ENCODE measurements at regions of chr17 and their contacts with region 1.

Region 1: DNA sequence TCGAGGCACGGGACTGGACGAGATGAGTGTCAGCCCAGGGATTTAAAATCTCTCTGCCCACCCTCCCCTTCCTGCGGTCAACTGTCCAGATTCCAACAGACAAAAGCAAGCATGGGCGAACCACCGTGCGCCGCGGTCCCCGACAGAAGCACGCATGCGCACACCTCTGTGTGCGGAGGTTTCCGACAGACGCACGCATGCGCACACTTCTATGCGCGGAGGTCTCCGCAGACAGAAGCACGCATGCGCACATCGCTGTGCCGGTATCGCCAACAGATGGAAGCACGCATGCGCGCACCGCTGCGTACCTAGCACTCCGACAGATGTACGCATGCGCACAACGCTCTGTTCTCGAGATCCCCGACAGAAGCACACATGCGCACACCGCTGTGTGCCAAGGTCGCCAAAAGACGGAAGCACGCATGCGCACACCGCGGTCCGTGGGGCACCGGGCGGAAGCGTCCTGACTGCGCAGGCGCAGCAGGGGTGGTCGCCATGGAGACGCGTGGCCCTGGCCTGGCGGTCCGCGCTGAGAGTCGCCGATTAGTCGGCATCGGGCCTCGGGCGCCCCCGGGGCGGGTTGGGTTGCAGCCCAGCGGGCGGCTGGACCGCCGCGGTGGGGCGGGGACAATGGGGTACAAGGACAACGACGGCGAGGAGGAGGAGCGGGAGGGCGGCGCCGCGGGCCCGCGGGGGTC is 57.4 kb upstream of the RPH3AL start:
- DNase-seq: peak; percentile 98 to 100 (median 99)
- H3K4me3 ChIP-seq: peak overlapping the region; percentile 72
- H3K4me3 Mint-ChIP-seq: peak overlapping the region; percentile 88 to 95 (median 90)
- H3K27ac ChIP-seq: peak overlapping the region; percentile 85
- H3K27ac Mint-ChIP-seq: peak overlapping the region; percentile 84 to 98 (median 96)
- H3K4me1 ChIP-seq: peaks cover 49% of the 10 kb centered on the region
- H3K4me1 Mint-ChIP-seq: peaks cover 49 to 61% (median 61%) of the 10 kb centered on the region in 3 donors
- H3K27me3 ChIP-seq: no peaks in the 10 kb centered on the region
- H3K27me3 Mint-ChIP-seq: peaks cover 0 to 8% of the 10 kb centered on the region in 2 donors

Region 2: DNA sequence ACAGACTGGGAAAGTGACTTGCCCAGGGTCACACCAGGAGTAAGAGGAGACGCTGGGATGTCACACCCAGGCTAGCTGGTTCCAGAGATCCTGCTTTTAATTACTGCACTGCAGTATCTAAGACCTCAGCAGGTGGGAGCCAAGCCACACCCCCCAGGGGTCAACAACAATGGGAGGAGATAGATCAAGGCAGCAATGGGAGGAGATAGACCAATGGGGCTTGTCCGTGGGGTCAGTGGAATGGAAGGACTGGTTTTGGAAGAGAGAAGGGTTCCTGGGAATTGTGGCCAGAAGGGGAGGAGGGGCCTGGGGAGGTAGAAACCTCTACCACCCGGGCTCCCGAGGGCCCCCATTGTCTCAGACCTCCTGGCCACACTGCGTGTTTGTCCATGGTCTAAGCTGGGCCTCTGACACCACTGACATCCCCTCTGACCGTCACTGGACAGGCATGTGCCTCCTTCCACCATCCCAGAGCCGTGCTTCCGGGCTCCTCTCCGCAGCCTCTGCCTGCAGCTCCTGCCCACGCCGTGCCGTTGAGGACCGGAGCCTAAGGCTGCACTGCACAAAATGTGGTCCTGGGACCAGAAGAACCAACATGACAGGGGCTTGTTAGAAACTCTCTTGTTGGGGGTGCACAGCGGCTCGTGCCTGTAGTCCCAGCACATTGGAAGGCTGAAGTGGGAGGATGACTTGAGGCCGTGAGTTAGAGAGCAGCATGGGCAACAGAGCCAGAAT is 12.4 kb after region 1 on chr17:
- CTCF ChIA-PET with region 1: interaction called, 22 read pairs
- POLR2A ChIA-PET with region 1: no interaction called
- DNase-seq: no peak
- H3K4me3 ChIP-seq: no peak overlapping the region
- H3K4me3 Mint-ChIP-seq: no peak overlapping the region
- H3K27ac ChIP-seq: no peak overlapping the region
- H3K27ac Mint-ChIP-seq: no peak overlapping the region
- H3K4me1 ChIP-seq: peaks cover 40% of the 10 kb centered on the region
- H3K4me1 Mint-ChIP-seq: peaks cover 30 to 36% (median 36%) of the 10 kb centered on the region in 3 donors
- H3K27me3 ChIP-seq: no peaks in the 10 kb centered on the region
- H3K27me3 Mint-ChIP-seq: peaks cover 0 to 1% of the 10 kb centered on the region in 2 donors

Region 3: GRCh38 chr17:489758-490329 is 79.8 kb after region 1 on chr17:
- CTCF ChIA-PET with region 1: interaction called, 9 read pairs
- POLR2A ChIA-PET with region 1: interaction called, 10 read pairs
- DNase-seq: peak; percentile 46 to 79 (median 66)
- H3K4me3 ChIP-seq: peak overlapping the region; percentile 76
- H3K4me3 Mint-ChIP-seq: peak overlapping the region; percentile 86 to 97 (median 91)
- H3K27ac ChIP-seq: peak overlapping the region; percentile 38
- H3K27ac Mint-ChIP-seq: peak overlapping the region in 7 of 8 donors; percentile 50 to 94 (median 82)
- H3K4me1 ChIP-seq: peaks cover 16% of the 10 kb centered on the region
- H3K4me1 Mint-ChIP-seq: peaks cover 6 to 15% (median 7%) of the 10 kb centered on the region in 3 donors
- H3K27me3 ChIP-seq: no peaks in the 10 kb centered on the region
- H3K27me3 Mint-ChIP-seq: no peaks in the 10 kb centered on the region

Region 4: DNA sequence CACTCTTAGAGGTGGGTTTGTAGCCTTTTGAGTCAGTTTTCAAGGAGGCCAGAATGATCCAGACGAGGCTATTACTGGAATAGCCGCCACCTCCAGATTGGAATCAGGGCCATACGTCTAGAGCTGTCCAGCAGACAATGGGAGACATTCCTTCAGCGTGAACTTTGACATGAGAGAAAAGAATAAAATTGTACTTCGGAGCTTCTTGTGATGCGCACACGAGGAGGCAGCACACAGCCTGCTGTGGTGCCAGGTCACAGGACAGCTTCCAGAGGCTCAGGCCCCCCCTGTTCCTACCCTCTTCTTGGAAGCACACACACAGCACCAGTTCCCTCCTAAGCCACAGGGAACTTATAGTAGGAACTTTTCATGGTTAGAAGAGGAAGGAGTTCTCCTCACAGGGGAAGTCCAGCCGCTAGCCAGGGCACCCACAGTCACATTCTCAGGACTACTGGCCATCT is 223.7 kb after region 1 on chr17:
- CTCF ChIA-PET with region 1: no interaction called
- POLR2A ChIA-PET with region 1: no interaction called
- DNase-seq: no peak
- H3K4me3 ChIP-seq: no peak overlapping the region
- H3K4me3 Mint-ChIP-seq: no peak overlapping the region
- H3K27ac ChIP-seq: no peak overlapping the region
- H3K27ac Mint-ChIP-seq: no peak overlapping the region
- H3K4me1 ChIP-seq: no peaks in the 10 kb centered on the region
- H3K4me1 Mint-ChIP-seq: no peaks in the 10 kb centered on the region
- H3K27me3 ChIP-seq: no peaks in the 10 kb centered on the region
- H3K27me3 Mint-ChIP-seq: no peaks in the 10 kb centered on the region

Region 5: DNA sequence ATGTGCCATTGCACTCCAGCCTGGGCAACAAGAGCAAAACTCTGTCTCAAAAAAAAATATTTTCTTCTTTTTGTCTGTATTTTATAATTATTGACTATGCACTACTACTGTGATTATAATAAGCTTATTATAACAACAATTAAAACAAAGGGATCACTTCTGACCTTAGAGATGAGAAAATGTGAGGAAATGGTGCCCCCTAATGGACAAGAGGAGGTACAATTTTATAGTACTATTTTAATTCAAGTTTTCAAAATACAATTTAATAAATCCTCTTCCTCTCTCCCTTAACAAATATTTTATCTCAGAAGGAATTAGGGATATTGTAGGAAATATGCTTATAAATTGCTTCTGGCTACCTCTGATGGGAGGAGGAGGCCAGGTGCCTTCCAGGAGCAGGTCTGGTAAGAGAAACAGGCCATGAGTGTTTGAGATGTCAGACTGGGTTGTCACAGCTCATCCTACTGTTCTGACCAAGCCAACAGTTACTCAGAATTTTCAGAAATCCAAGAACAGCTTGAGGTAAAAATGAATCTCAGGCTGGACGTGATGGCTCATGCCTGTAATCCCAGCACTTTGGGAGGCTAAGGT is 290.6 kb after region 1 on chr17:
- CTCF ChIA-PET with region 1: interaction called, 102 read pairs
- POLR2A ChIA-PET with region 1: interaction called, 3 read pairs
- DNase-seq: peak in 2 of 5 donors; percentile 43
- H3K4me3 ChIP-seq: no peak overlapping the region
- H3K4me3 Mint-ChIP-seq: no peak overlapping the region
- H3K27ac ChIP-seq: no peak overlapping the region
- H3K27ac Mint-ChIP-seq: peak overlapping the region in 3 of 8 donors; percentile 27 to 62 (median 58)
- H3K4me1 ChIP-seq: no peaks in the 10 kb centered on the region
- H3K4me1 Mint-ChIP-seq: peaks cover 8 to 10% (median 8%) of the 10 kb centered on the region in 3 donors
- H3K27me3 ChIP-seq: no peaks in the 10 kb centered on the region
- H3K27me3 Mint-ChIP-seq: no peaks in the 10 kb centered on the region